Adrenal gland (tissue), 19 donors: ENCODE measurements at regions of chr11 and their contacts with region 1.

Region 1: GRCh38 chr11:123707606-123708205 is 33.8 kb downstream of the ZNF202 start:
- DNase-seq: peak; percentile 47 to 84 (median 66)
- H3K4me3 ChIP-seq: no peak overlapping the region
- H3K27ac ChIP-seq: no peak overlapping the region
- H3K4me1 ChIP-seq: peaks cover 0 to 3% of the 10 kb centered on the region in 2 donors
- H3K27me3 ChIP-seq: no peaks in the 10 kb centered on the region
- CTCF ChIP-seq: peak; percentile 51 to 82 (median 70)
- POLR2A ChIP-seq: no peak

Region 2: DNA sequence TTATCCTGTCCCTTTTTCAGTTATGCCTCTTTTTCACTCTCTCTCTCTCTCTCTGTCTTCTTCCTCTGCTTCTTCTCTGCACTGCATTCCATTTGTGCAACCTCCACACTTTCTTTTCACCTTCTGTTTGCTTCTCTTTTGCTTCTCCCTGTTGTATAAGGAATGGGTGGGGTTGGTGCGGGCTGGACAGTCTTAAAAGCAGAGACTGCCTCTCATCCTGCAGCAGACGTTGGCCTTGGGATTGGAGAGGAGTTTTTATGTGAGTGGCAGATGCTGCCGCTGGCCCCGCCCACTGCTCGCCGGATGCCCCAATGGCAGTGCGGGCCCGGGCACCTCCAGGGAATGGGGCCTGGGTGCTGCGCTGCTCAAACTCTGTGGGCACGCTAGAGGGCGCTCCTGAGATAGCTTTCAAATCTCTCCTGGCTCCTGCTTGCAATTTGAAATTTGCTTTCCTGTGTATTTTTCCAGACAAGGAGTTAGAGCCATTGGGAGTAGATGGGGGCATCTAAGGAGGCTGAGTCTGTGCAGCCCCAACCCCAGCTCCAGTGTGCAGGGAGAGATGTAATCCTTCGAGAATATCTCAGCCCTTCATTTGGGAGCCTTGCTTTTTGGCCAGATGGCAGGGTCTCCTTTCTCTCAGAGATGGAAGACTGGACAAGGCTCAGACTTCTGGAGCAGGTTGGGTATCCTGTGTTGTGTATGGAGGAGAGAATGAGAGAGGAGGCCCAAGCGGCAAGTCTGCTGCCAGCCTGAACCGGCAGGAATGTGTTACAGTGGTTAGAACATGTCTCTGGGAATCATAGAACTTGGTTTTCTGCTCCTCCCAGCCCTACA is 196.5 kb before region 1 on chr11:
- intact Hi-C with region 1: loop called in 1 of 2 experiments (anchors 10 kb)
- DNase-seq: peak; percentile 92 to 98 (median 96)
- H3K4me3 ChIP-seq: no peak overlapping the region
- H3K27ac ChIP-seq: peak overlapping the region in 3 of 5 donors; percentile 71 to 81 (median 77)
- H3K4me1 ChIP-seq: peaks cover 14 to 36% of the 10 kb centered on the region in 2 donors
- H3K27me3 ChIP-seq: no peaks in the 10 kb centered on the region
- CTCF ChIP-seq: peak; percentile 84 to 94 (median 88)
- POLR2A ChIP-seq: peak in 1 of 2 donors; percentile 67

Region 3: DNA sequence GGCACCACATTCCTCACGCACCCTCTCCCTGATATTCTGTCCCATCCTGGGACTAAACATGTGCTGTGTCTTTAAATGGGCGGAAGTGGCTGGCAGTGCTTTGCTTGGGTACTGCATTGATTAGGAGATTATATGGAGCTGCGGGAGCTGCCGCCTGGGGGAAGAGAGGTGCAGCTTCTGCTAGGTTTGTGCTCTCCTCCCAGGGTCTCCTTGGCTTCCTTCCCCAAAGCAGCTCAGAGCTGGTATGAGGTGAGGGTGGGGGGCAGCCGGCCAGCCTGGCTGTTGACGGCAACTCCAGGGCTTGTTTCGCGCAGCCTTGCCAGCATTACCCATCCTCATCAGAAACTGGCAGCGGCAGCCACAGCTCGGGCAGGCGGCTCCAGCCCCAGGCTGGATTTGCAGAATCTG is 182.2 kb before region 1 on chr11:
- intact Hi-C with region 1: no loop called
- DNase-seq: peak in 2 of 7 donors; percentile 46 to 60
- H3K4me3 ChIP-seq: peak overlapping the region in 1 of 4 donors; percentile 50
- H3K27ac ChIP-seq: peak overlapping the region in 3 of 5 donors; percentile 58 to 73 (median 72)
- H3K4me1 ChIP-seq: peaks cover 19 to 62% of the 10 kb centered on the region in 2 donors
- H3K27me3 ChIP-seq: no peaks in the 10 kb centered on the region
- CTCF ChIP-seq: peak in 1 of 6 experiments; percentile 7
- POLR2A ChIP-seq: peak in 1 of 2 donors; percentile 33

Region 4: GRCh38 chr11:123580557-123581275 is 127.0 kb before region 1 on chr11:
- intact Hi-C with region 1: loop called (anchors 5 kb)
- DNase-seq: peak in 6 of 7 donors; percentile 64 to 81 (median 68)
- H3K4me3 ChIP-seq: no peak overlapping the region
- H3K27ac ChIP-seq: peak overlapping the region in 3 of 5 donors; percentile 11 to 58 (median 48)
- H3K4me1 ChIP-seq: peaks cover 6 to 34% of the 10 kb centered on the region in 2 donors
- H3K27me3 ChIP-seq: no peaks in the 10 kb centered on the region
- CTCF ChIP-seq: peak; percentile 87 to 93 (median 88)
- POLR2A ChIP-seq: no peak

Region 5: DNA sequence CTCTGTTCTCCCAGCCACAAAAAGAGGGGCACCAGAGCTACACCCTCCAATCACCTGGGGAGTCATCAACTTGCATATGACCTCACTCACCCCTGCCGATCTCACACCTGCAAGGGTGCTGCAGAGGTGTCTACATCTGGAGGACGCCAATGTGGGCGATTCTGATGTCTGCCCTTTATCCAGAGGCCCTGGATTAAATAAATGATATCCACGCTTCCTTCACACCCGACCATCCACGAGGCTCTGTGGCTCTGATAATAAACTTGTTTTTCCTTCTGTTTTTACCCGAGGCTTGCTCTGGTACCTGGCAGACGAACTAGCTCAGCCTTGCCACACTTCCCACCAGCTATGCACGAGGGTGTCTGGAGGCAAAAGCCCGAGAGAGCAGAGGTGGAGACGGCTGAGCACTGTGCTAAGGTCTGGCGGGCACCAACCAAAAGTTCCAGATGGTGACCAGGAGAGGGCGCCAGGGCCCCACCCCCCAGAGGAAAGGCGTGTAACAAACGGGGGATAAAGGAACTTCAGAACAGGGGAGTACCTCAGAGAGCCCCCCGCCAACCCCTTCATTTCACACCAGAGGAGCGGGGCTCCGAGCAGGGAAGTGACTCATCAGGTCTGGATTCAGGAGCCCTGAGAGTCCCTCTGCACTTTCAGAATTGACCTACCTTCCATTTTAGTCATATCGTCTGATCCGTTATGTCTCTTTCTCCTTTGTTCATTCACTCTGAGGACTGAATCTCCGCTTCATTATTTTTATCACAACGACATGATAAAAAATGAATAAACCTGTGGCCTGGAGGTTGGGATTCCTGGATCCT is 66.8 kb before region 1 on chr11:
- intact Hi-C with region 1: loop called (anchors 5 to 10 kb)
- DNase-seq: peak in 6 of 7 donors; percentile 36 to 79 (median 52)
- H3K4me3 ChIP-seq: no peak overlapping the region
- H3K27ac ChIP-seq: no peak overlapping the region
- H3K4me1 ChIP-seq: no peaks in the 10 kb centered on the region
- H3K27me3 ChIP-seq: no peaks in the 10 kb centered on the region
- CTCF ChIP-seq: peak; percentile 57 to 78 (median 72)
- POLR2A ChIP-seq: no peak

Region 6: DNA sequence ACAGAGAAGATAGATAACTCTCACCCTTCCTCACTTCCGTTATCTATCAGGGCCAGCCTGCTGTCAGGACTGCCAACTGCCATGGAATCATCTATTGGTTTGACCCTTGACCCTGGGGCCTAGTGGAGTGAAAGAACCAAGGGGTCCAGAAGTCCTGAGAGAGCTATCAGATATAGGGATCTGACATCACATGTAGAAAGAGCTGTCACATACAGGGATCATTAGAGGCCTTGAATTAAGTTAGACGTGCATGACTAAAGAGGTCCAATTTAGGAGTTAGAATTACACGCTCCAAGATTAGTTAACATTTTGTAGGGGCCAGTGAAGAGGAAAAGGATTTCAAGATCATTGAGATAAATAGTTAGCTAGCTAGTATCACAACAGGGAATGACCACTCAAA is 177.9 kb after region 1 on chr11 and contains the start of gene TMEM225:
- intact Hi-C with region 1: no loop called
- DNase-seq: no peak
- H3K4me3 ChIP-seq: no peak within 1 kb of the TSS
- H3K27ac ChIP-seq: no peak within 1 kb of the TSS
- H3K4me1 ChIP-seq: no peaks in the 10 kb centered on the region
- H3K27me3 ChIP-seq: no peaks in the 10 kb centered on the region
- CTCF ChIP-seq: no peak
- POLR2A ChIP-seq: no peak
- total RNA-seq, gene TMEM225: not detected